K562 (cell line): ENCODE measurements at regions of chr4 and their contacts with region 1.

Region 1: DNA sequence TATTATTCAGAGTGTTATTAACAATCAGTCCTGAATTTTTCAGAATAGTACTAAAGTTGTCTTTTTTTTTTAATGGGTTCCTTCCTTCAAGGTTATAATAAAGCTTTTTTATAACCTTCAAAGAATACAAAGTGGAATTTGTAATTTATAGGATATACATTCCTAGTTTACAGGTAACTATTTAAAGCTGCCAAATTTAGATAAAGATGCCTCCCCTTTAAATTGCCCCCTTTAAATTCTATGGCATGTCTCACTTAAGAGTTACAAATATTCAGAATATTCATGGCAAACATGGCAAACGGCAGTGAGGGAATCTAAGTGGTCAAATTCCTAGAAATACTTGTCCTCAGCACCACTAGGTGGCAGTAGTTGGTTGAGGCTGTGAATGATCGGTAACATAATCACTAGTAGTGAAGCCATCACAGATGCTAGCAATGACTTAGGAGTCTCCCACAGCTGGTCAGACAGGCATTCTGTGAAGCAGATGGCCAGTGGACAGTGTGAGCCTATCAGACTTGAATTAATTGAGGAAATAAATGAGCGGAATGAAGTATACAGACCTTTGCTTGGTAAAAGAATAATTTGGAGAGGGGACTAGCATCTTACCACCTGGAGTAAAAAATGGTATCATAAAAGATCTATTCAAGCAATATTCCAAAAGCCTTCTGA is 86.4 kb downstream of the CBR4 start:
- DNase-seq: peak; percentile 57 to 76 (median 61)
- ATAC-seq: peak; percentile 93
- H3K4me3 ChIP-seq: no peak overlapping the region
- H3K27ac ChIP-seq: no peak overlapping the region
- H3K4me1 ChIP-seq: no peaks in the 10 kb centered on the region
- H3K27me3 ChIP-seq: no peaks in the 10 kb centered on the region
- CTCF ChIP-seq: peak; percentile 68 to 77 (median 72)
- EP300 ChIP-seq: no peak
- POLR2A ChIP-seq: no peak
- RAD21 ChIP-seq: peak; percentile 61 to 80

Region 2: GRCh38 chr4:168076989-168077725 is 846.5 kb before region 1 on chr4:
- CTCF ChIA-PET with region 1: no interaction called
- POLR2A ChIA-PET with region 1: no interaction called
- in situ Hi-C with region 1: no loop called
- intact Hi-C with region 1: no loop called
- DNase-seq: peak; percentile 26 to 50 (median 32)
- ATAC-seq: 0 out of 3 replicates have a peak, but pooled peaks have one; percentile 47
- H3K4me3 ChIP-seq: no peak overlapping the region
- H3K27ac ChIP-seq: no peak overlapping the region
- H3K4me1 ChIP-seq: no peaks in the 10 kb centered on the region
- H3K27me3 ChIP-seq: no peaks in the 10 kb centered on the region
- CTCF ChIP-seq: peak; percentile 49 to 65 (median 64)
- EP300 ChIP-seq: no peak
- POLR2A ChIP-seq: no peak
- RAD21 ChIP-seq: peak; percentile 55 to 73

Region 3: GRCh38 chr4:168183717-168184608 is 739.7 kb before region 1 on chr4:
- CTCF ChIA-PET with region 1: interaction called, 7 read pairs
- POLR2A ChIA-PET with region 1: no interaction called
- in situ Hi-C with region 1: loop called (anchors 5 kb)
- intact Hi-C with region 1: no loop called
- DNase-seq: peak in 3 of 4 experiments; percentile 10 to 36 (median 11)
- ATAC-seq: no peak
- H3K4me3 ChIP-seq: no peak overlapping the region
- H3K27ac ChIP-seq: no peak overlapping the region
- H3K4me1 ChIP-seq: no peaks in the 10 kb centered on the region
- H3K27me3 ChIP-seq: no peaks in the 10 kb centered on the region
- CTCF ChIP-seq: peak in 2 of 3 experiments; percentile 17 to 54; a peak in 2 of 6 replicates
- EP300 ChIP-seq: no peak
- POLR2A ChIP-seq: no peak
- RAD21 ChIP-seq: peak; percentile 78 to 82

Region 4: DNA sequence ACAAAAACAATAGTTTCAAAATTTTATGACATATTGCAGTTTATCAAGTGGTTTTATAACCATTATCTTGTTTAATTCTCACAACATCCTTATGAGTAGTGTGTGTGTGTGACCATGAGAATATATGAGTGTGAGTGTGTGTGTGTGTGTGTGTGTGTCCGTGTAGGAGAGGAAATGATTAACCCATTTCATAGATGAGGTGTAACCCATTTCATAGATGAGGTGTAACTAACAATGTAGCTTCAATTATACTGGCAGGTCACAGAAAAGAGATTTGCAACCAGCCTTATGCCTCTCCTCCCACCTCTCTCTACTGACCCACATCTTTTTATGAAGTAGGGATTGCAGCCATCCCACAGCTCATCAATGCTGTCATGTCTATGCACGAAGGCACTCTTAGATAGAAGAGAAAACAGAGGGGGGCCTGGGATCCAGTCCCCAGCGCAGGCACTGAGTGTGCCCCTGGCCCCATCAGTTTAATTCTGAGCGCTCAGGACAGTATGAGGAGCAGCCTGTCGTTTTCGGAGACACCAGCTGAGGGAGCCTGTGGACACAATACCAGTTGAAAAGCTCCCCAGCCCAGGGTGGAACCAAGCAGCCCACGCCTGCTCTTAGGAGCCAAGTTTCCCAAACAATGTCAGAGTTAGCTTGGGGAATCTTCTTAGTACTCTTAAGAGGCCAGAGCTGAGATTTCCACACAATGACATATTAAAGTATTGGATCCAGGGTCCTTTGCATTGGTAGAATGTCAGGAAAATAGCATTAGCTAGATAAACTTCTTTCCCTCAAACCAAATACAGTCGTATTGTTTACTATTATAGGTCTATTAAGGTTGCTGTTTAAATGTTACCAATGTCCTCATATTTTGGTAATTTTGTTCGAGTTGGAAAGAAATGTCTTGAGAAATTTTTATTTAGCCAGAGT is 338.2 kb before region 1 on chr4:
- CTCF ChIA-PET with region 1: no interaction called
- POLR2A ChIA-PET with region 1: no interaction called
- in situ Hi-C with region 1: no loop called
- intact Hi-C with region 1: loop called (anchors 5 kb)
- DNase-seq: peak; percentile 14 to 49 (median 28)
- ATAC-seq: peak; percentile 97
- H3K4me3 ChIP-seq: no peak overlapping the region
- H3K27ac ChIP-seq: no peak overlapping the region
- H3K4me1 ChIP-seq: no peaks in the 10 kb centered on the region
- H3K27me3 ChIP-seq: no peaks in the 10 kb centered on the region; a peak in 1 of 5 replicates
- CTCF ChIP-seq: peak; percentile 45 to 53 (median 47)
- EP300 ChIP-seq: no peak
- POLR2A ChIP-seq: no peak
- RAD21 ChIP-seq: peak; percentile 11 to 53; a peak in 2 of 4 replicates

Region 5: GRCh38 chr4:169010125-169011023 is 86.7 kb after region 1 on chr4 and contains the start of gene CBR4:
- CTCF ChIA-PET with region 1: interaction called, 5 read pairs
- POLR2A ChIA-PET with region 1: no interaction called
- in situ Hi-C with region 1: no loop called
- intact Hi-C with region 1: loop called (anchors 2 kb)
- DNase-seq: peak; percentile 83 to 99 (median 86)
- ATAC-seq: peak; percentile 94
- H3K4me3 ChIP-seq: peak within 1 kb of the TSS; percentile 63
- H3K27ac ChIP-seq: peak within 1 kb of the TSS; percentile 95
- H3K4me1 ChIP-seq: peaks cover 7 to 36% of the 10 kb centered on the region in 2 experiments; a peak in 4 of 5 replicates
- H3K27me3 ChIP-seq: no peaks in the 10 kb centered on the region
- CTCF ChIP-seq: peak in 2 of 3 experiments; percentile 38 to 39; a peak in 3 of 6 replicates
- EP300 ChIP-seq: 0 out of 2 replicates have a peak, but pooled peaks have one; percentile 16
- POLR2A ChIP-seq: peak; percentile 94
- RAD21 ChIP-seq: no peak
- polyA plus RNA-seq, gene CBR4: 26.0 to 26.4 TPM

Region 6: GRCh38 chr4:169311643-169312365 is 388.1 kb after region 1 on chr4:
- CTCF ChIA-PET with region 1: no interaction called
- POLR2A ChIA-PET with region 1: no interaction called
- in situ Hi-C with region 1: no loop called
- intact Hi-C with region 1: loop called (anchors 10 kb)
- DNase-seq: peak; percentile 32 to 57 (median 40)
- ATAC-seq: peak; percentile 99
- H3K4me3 ChIP-seq: no peak overlapping the region
- H3K27ac ChIP-seq: no peak overlapping the region
- H3K4me1 ChIP-seq: no peaks in the 10 kb centered on the region
- H3K27me3 ChIP-seq: no peaks in the 10 kb centered on the region; a peak in 2 of 5 replicates
- CTCF ChIP-seq: peak; percentile 56 to 64 (median 63)
- EP300 ChIP-seq: no peak
- POLR2A ChIP-seq: no peak
- RAD21 ChIP-seq: peak in 1 of 2 experiments; percentile 29; a peak in 2 of 4 replicates

Region 7: GRCh38 chr4:169485791-169486742 is 562.4 kb after region 1 on chr4:
- CTCF ChIA-PET with region 1: interaction called, 3 read pairs
- POLR2A ChIA-PET with region 1: no interaction called
- in situ Hi-C with region 1: loop called (anchors 5 kb)
- intact Hi-C with region 1: loop called (anchors 2 kb)
- DNase-seq: peak in 2 of 4 experiments; percentile 14 to 45
- ATAC-seq: peak; percentile 80
- H3K4me3 ChIP-seq: no peak overlapping the region
- H3K27ac ChIP-seq: no peak overlapping the region
- H3K4me1 ChIP-seq: no peaks in the 10 kb centered on the region
- H3K27me3 ChIP-seq: no peaks in the 10 kb centered on the region
- CTCF ChIP-seq: peak; percentile 36 to 68 (median 44); a peak in 3 of 6 replicates
- EP300 ChIP-seq: no peak
- POLR2A ChIP-seq: no peak
- RAD21 ChIP-seq: peak; percentile 68 to 73

Region 8: GRCh38 chr4:169566021-169566818 is 642.6 kb after region 1 on chr4:
- CTCF ChIA-PET with region 1: no interaction called
- POLR2A ChIA-PET with region 1: no interaction called
- in situ Hi-C with region 1: no loop called
- intact Hi-C with region 1: loop called (anchors 1 kb)
- DNase-seq: peak; percentile 18 to 52 (median 21)
- ATAC-seq: peak; percentile 89
- H3K4me3 ChIP-seq: no peak overlapping the region
- H3K27ac ChIP-seq: no peak overlapping the region
- H3K4me1 ChIP-seq: no peaks in the 10 kb centered on the region
- H3K27me3 ChIP-seq: no peaks in the 10 kb centered on the region
- CTCF ChIP-seq: peak; percentile 37 to 70 (median 48); a peak in 4 of 6 replicates
- EP300 ChIP-seq: no peak
- POLR2A ChIP-seq: no peak
- RAD21 ChIP-seq: peak; percentile 56 to 58